OCI-LY7 (cell line): ENCODE measurements at regions of chr3 and their contacts with region 1.

Region 1: GRCh38 chr3:46923559-46924350 is 46.2 kb downstream of the PTH1R start:
- DNase-seq: peak; percentile 79
- H3K4me3 ChIP-seq: no peak overlapping the region
- H3K27ac ChIP-seq: peak overlapping the region; percentile 41
- H3K4me1 ChIP-seq: peaks cover 53% of the 10 kb centered on the region
- CTCF ChIP-seq: peak; percentile 86

Region 2: GRCh38 chr3:46953234-46954010 is 29.7 kb after region 1 on chr3:
- CTCF ChIA-PET with region 1: no interaction called
- POLR2A ChIA-PET with region 1: interaction called, 26 read pairs
- intact Hi-C with region 1: loop called (anchors 1 kb)
- DNase-seq: peak; percentile 62
- H3K4me3 ChIP-seq: peak overlapping the region; percentile 49
- H3K27ac ChIP-seq: peak overlapping the region; percentile 77
- H3K4me1 ChIP-seq: peaks cover 97% of the 10 kb centered on the region
- CTCF ChIP-seq: no peak

Region 3: GRCh38 chr3:46970391-46971091 is 46.8 kb after region 1 on chr3:
- CTCF ChIA-PET with region 1: interaction called, 3 read pairs
- POLR2A ChIA-PET with region 1: interaction called, 3 read pairs
- intact Hi-C with region 1: loop called (anchors 1 kb)
- DNase-seq: no peak
- H3K4me3 ChIP-seq: peak overlapping the region; percentile 56
- H3K27ac ChIP-seq: peak overlapping the region; percentile 87
- H3K4me1 ChIP-seq: peaks cover 89% of the 10 kb centered on the region
- CTCF ChIP-seq: no peak

Region 4: DNA sequence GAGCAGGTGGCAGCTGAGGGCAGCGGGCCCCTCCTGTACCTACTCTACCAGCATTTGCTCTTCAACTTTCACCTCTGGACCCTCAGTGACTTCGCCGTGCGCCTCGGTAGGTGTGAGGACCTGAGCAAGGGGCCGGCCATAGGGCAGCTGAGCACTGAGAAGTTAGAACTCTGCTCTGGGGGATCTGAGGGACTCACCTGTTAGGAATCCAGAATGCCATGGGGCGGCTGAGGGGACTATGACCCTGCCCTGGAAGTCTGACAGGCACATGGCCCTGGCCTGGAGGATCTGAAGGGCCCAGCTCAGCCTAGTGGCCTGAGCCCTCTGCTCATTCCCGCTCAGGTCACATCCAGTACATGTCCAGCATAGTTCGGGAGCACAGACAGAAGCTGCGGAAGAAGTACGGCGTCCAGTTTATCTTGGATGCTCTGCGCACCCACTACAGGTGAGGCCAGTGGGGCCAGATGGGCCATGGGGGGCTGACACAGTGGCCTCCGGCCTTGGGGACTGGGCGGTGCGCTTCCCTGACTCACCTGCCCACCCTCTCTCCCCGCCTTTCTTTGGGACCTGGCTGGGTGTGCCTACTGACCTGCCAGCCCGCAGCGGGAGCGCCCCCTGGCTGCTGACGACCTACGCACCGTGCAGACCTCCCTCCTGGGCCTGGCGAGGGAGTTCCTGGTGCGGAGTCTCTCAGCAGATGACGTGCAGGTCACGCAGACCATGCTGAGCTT is 74.5 kb after region 1 on chr3:
- CTCF ChIA-PET with region 1: interaction called, 3 read pairs
- POLR2A ChIA-PET with region 1: interaction called, 5 read pairs
- intact Hi-C with region 1: loop called (anchors 1 kb)
- DNase-seq: peak; percentile 77
- H3K4me3 ChIP-seq: no peak overlapping the region
- H3K27ac ChIP-seq: no peak overlapping the region
- H3K4me1 ChIP-seq: no peaks in the 10 kb centered on the region
- CTCF ChIP-seq: peak; percentile 87

Region 5: GRCh38 chr3:47324278-47324865 is 400.6 kb after region 1 on chr3:
- CTCF ChIA-PET with region 1: no interaction called
- POLR2A ChIA-PET with region 1: interaction called, 3 read pairs
- intact Hi-C with region 1: loop called (anchors 5 kb)
- DNase-seq: peak; percentile 81
- H3K4me3 ChIP-seq: no peak overlapping the region
- H3K27ac ChIP-seq: no peak overlapping the region
- H3K4me1 ChIP-seq: no peaks in the 10 kb centered on the region
- CTCF ChIP-seq: peak; percentile 88

Region 6: DNA sequence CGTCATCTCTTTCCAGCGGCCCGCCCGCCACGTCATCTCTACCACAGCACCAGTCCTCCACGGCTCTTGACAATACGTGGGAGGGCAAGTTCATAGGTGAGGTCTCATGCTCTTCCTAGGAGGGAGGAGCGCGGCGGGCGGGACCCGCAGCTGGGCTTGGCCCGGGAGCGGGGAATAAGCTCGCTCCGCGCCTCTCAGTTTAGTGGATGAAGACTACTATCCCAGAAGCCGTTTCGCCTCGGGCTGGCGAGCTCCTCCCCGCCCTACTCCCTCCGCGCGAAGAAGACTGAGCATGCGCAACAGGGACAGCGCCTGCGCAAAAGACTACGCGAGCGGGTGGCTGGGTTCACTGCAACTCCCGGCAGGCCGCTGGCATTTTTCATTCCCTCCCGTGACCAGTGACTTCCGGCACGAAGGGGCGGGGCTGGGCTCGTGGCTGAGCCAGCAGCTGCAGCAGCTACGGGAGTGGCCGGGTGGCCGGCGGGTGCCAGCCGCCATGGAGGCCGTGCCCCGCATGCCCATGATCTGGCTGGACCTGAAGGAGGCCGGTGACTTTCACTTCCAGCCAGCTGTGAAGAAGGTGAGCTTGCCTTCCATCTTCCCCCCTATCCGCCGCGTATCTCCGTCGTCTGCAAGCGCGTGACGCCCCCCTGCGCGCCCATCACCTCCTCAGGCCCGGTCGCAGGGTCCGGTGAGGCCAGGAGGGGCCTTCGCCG is 457.0 kb after region 1 on chr3 and contains the start of gene PTPN23:
- CTCF ChIA-PET with region 1: no interaction called
- POLR2A ChIA-PET with region 1: no interaction called
- intact Hi-C with region 1: loop called (anchors 5 kb)
- DNase-seq: peak; percentile 99
- H3K4me3 ChIP-seq: peak within 1 kb of the TSS; percentile 75
- H3K27ac ChIP-seq: peak within 1 kb of the TSS; percentile 63
- H3K4me1 ChIP-seq: peaks cover 35% of the 10 kb centered on the region
- CTCF ChIP-seq: no peak
- total RNA-seq, gene PTPN23: 13.6 and 15.5 TPM in 2 replicates